HEK293 (cell line): ENCODE measurements at regions of chr20 and their contacts with region 1.

Region 1: GRCh38 chr20:36861875-36862801 is 13.8 kb upstream of the TLDC2 start:
- H3K4me3 ChIP-seq: peak overlapping the region; percentile 49
- H3K27ac ChIP-seq: peak overlapping the region; percentile 83; the same call in 1 of the 2 replicates
- H3K4me1 ChIP-seq: peaks cover 9% of the 10 kb centered on the region; the same call in 1 of the 2 replicates
- CTCF ChIP-seq: no peak

Region 2: GRCh38 chr20:36792422-36792821 is 69.7 kb before region 1 on chr20:
- CTCF ChIA-PET with region 1: interaction called, 12 read pairs
- POLR2A ChIA-PET with region 1: no interaction called
- H3K4me3 ChIP-seq: no peak overlapping the region
- H3K27ac ChIP-seq: no peak overlapping the region
- H3K4me1 ChIP-seq: no peaks in the 10 kb centered on the region
- CTCF ChIP-seq: peak; percentile 49

Region 3: DNA sequence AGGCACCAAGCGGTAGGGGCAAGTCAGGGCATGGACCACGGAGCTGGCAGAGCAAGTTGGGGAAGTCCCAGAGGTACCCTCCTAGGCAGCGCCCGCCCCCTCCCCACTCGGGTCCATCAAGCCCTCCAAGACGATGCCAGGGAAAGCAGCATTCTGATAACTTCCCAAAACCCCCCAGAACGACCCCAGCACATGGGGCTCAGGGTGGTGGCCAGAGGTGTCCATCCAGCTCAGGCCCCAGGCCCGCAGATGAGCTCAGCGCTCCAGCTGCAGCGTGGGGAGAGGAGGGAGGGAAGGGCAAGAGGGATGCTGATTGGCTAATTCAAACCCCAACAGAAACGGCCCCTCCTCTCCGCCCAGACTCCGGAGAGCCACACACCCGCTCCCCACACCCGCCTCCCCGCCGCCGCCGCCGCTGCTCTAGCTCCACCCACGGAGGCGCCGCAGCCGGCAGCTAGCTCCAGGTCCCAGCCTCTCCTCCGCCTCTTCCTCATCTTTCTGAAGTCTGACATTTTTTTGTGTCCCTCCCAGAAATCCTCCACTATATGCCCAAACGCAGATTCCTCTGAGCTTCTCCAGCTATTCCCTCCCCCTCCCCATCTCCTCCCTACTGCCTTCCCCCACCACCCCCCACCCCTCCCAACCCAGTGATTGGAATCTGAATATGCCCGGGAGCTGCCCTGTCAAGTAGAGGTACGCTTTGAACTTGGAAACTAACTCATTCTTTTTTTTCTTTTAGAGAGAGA is 26.5 kb before region 1 on chr20:
- CTCF ChIA-PET with region 1: interaction called, 18 read pairs
- POLR2A ChIA-PET with region 1: interaction called, 17 read pairs
- H3K4me3 ChIP-seq: no peak overlapping the region; the same call in 1 of the 2 replicates
- H3K27ac ChIP-seq: peak overlapping the region; percentile 11; the same call in 1 of the 2 replicates
- H3K4me1 ChIP-seq: no peaks in the 10 kb centered on the region
- CTCF ChIP-seq: no peak

Region 4: DNA sequence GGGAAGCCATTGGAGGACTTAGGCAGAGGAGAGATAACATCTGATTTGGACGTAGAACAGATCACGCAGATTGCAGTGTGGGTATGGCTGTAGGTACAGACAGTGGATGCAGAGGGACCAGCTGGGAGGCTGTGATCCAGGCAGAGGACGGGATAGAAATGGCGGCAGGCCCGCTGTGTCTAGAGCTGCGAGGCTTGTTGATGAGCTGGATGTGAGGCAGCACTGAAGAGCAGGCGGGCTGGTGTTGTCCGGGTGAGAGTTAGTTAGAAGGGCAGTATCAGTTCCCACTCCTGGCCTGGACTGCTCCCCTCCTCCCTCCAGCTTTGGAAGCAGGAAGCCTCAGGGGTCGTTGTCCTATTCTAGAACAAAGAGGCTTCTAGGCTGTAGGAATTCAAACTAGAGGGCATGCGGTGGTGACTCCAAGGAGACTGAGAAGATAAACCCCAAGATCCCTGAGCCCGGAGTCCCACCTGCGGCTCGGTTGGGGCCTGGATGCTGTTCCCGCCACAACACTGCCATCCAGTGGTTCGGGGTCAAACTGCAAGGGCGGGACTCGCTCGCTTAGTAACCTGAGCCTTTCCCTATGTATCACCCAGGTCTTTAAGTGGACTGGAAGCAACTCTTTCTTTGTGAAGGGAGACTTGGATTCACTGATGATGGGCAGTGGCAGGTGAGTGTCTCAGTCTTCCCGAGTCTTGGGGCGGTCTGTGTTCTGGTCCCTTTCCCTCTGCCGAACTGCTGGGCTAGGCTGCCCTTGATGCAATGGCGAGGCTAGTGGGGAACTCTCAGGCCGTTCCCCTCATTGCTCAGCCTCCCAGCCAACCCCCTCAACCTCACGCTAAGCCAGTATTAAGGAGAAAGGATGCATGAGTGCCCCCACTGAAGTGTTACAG is 25.0 kb after region 1 on chr20:
- CTCF ChIA-PET with region 1: interaction called, 14 read pairs
- POLR2A ChIA-PET with region 1: no interaction called
- H3K4me3 ChIP-seq: no peak overlapping the region
- H3K27ac ChIP-seq: no peak overlapping the region
- H3K4me1 ChIP-seq: no peaks in the 10 kb centered on the region; the same call in 1 of the 2 replicates
- CTCF ChIP-seq: peak; percentile 91